Heart left ventricle (tissue), 16 donors: ENCODE measurements at regions of chr1 and their contacts with region 1.

Region 1: DNA sequence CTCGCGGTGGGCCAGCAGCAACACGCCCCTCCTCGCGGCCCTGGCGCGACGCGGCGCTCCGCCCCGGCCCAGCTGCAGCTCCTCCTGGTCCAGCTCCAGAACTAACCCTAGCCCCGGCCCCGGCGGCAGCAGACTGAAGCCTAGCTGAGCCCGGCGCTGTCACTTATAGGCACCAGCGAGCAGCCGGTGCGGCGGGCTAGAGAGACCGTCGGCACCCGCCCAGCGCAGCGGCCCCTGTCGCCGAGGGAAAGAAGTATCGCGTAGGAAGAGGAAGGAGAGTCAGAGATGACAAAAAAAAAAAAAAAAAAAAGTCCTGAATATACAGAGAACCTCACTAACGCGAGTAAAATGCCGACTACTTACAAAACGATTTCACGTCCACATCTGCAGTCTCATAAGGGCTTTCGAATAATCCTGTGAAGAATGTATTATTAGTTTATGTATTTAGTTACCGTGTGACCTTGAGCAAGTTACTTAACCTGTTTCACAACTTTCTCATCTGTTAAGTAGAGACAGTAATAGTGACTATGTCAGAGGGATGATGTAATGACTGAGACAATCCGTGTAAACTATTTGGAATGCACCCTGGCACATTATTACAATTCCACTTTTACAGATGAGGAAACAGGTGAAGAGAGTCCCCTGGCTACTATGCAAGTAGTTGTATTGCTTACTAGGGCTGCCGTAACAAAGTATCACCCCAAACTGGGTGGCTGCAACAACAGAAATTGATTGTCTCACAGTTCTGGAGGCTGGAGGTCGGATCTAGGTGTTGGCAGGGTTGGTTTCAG is at the start of gene SLC9A1:
- DNase-seq: peak; percentile 95 to 98 (median 95)
- ATAC-seq: peak; percentile 79 to 91 (median 90)
- H3K4me3 ChIP-seq: peak within 1 kb of the TSS; percentile 42 to 94 (median 77)
- H3K27ac ChIP-seq: peak within 1 kb of the TSS; percentile 76 to 95 (median 90)
- H3K4me1 ChIP-seq: peaks cover 0 to 51% (median 44%) of the 10 kb centered on the region in 12 donors
- H3K27me3 ChIP-seq: no peaks in the 10 kb centered on the region
- CTCF ChIP-seq: peak; percentile 64 to 91 (median 84)
- POLR2A ChIP-seq: peak; percentile 96 to 99
- total RNA-seq, gene SLC9A1: 11.4 to 44.9 (median 25.3) TPM

Region 2: GRCh38 chr1:26949926-26950319 is 205.3 kb before region 1 on chr1:
- intact Hi-C with region 1: no loop called
- DNase-seq: no peak
- ATAC-seq: peak in 1 of 4 donors; percentile 6
- H3K4me3 ChIP-seq: no peak overlapping the region
- H3K27ac ChIP-seq: peak overlapping the region in 3 of 12 donors; percentile 18 to 57 (median 28)
- H3K4me1 ChIP-seq: peaks cover 0 to 28% (median 8%) of the 10 kb centered on the region in 12 donors
- H3K27me3 ChIP-seq: peaks cover 0 to 3% (median 0%) of the 10 kb centered on the region in 9 donors
- CTCF ChIP-seq: no peak
- POLR2A ChIP-seq: no peak

Region 3: GRCh38 chr1:27111626-27112573 is 43.3 kb before region 1 on chr1:
- intact Hi-C with region 1: loop called in 9 of 10 experiments (anchors 1 to 10 kb)
- DNase-seq: peak; percentile 79 to 92 (median 82)
- ATAC-seq: peak; percentile 58 to 95 (median 94)
- H3K4me3 ChIP-seq: no peak overlapping the region
- H3K27ac ChIP-seq: peak overlapping the region in 9 of 12 donors; percentile 25 to 80 (median 54)
- H3K4me1 ChIP-seq: peaks cover 0 to 64% (median 26%) of the 10 kb centered on the region in 12 donors
- H3K27me3 ChIP-seq: no peaks in the 10 kb centered on the region
- CTCF ChIP-seq: peak in 6 of 12 donors; percentile 16 to 37 (median 22)
- POLR2A ChIP-seq: peak in 1 of 2 donors; percentile 21

Region 4: DNA sequence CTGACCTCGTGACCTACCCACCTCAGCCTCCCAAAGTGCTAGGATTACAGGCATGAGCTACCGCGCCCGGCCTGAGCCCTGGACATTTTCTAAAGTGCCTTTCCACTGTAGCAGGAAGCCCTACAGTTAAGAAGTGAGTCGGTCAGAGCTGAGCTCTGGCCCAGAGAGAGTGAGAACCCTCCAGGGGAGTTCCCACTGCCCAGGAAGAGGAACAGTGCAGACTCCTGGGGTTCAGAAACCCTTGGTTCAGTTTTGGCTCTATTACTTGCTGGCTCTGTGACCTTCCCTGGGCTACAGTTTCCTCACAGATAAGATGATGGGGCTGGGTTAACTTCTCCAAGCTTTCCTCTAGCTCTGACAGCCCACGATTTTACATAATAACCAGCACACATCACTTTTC is 21.2 kb before region 1 on chr1:
- intact Hi-C with region 1: loop called in 1 of 10 experiments (anchors 2 kb)
- DNase-seq: no peak
- ATAC-seq: no peak
- H3K4me3 ChIP-seq: no peak overlapping the region
- H3K27ac ChIP-seq: peak overlapping the region in 7 of 12 donors; percentile 27 to 94 (median 79)
- H3K4me1 ChIP-seq: peaks cover 0 to 89% (median 62%) of the 10 kb centered on the region in 12 donors
- H3K27me3 ChIP-seq: no peaks in the 10 kb centered on the region
- CTCF ChIP-seq: no peak
- POLR2A ChIP-seq: no peak

Region 5: GRCh38 chr1:27234049-27234882 is 79.1 kb after region 1 on chr1 and contains the start of gene WDTC1:
- intact Hi-C with region 1: loop called in 1 of 10 experiments (anchors 2 kb)
- DNase-seq: peak; percentile 98 to 99 (median 99)
- ATAC-seq: peak; percentile 98 to 99 (median 99)
- H3K4me3 ChIP-seq: peak within 1 kb of the TSS; percentile 71 to 98 (median 88)
- H3K27ac ChIP-seq: peak within 1 kb of the TSS; percentile 12 to 91 (median 82)
- H3K4me1 ChIP-seq: peaks cover 0 to 36% (median 13%) of the 10 kb centered on the region in 12 donors
- H3K27me3 ChIP-seq: no peaks in the 10 kb centered on the region
- CTCF ChIP-seq: no peak
- POLR2A ChIP-seq: peak in 1 of 2 donors; percentile 91
- total RNA-seq, gene WDTC1: 54.7 to 94.5 (median 60.3) TPM